ENCODE measurements at regions of chr7 and their contacts with region 1.

Region 1: DNA sequence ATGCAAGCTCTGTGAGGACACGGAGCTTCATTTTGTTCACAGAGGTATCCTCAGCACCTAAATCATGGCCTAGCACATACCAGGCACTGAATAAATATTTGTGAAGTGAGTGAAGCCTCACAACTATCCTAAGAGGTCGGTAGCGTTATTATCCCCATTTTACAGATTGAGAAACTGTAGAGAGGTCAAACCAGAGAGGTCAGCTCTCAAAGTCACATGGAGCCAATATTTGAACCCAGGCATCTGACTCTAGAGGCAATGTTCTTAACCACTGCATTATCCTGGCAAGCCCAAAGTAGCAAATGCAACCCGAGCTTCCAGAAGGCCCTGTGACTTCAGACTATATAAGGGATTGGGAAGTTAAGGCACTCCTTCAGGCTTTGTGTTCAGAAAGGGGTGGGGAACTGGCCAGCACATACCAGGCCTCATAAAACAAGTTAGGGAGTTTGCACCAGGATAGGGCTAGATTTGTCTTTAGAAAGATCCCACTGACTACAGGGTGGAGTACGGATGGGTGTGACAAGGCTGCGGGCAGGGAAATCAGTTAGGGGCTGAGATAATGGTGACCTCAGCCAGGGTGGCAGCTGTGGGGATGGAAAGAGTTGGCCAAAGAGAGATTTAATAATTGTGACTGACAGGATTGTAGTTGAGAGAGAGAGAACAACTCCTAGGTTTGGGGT is 101.4 kb downstream of the TBXAS1 start:
- DNase-seq: no peak
- ATAC-seq: no peak
- H3K4me3 ChIP-seq: no peak overlapping the region
- H3K27ac ChIP-seq: no peak overlapping the region
- H3K4me1 ChIP-seq: no peaks in the 10 kb centered on the region
- H3K27me3 ChIP-seq: peaks cover 0 to 2% (median 0%) of the 10 kb centered on the region in 3 donors
- CTCF ChIP-seq: no peak

Region 2: DNA sequence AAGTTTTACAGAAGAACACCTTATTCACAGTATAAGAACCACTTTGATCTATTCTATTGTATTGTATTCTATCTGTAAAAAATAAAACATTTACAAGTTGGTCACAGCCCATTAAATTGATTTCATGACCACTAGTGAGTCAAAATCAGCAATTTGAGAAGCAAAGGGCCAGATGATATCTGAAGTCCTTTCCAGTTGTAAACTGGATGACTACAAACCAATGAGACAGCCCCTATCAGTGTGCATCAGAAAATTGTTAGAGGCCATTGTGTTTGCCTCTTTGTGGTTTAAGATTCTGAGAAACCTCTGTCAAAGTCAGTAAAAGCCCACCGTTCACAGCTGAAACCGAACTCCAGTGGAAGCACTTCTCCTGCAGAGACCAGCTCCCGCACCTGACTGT is 46.6 kb before region 1 on chr7:
- intact Hi-C with region 1: loop called in 1 of 2 experiments (anchors 5 kb)
- DNase-seq: no peak
- ATAC-seq: no peak
- H3K4me3 ChIP-seq: no peak overlapping the region
- H3K27ac ChIP-seq: no peak overlapping the region
- H3K4me1 ChIP-seq: no peaks in the 10 kb centered on the region
- H3K27me3 ChIP-seq: no peaks in the 10 kb centered on the region
- CTCF ChIP-seq: no peak

Region 3: GRCh38 chr7:139976838-139977656 is 46.6 kb after region 1 on chr7:
- intact Hi-C with region 1: loop called in 1 of 2 experiments (anchors 5 kb)
- DNase-seq: no peak
- ATAC-seq: no peak
- H3K4me3 ChIP-seq: no peak overlapping the region
- H3K27ac ChIP-seq: no peak overlapping the region
- H3K4me1 ChIP-seq: no peaks in the 10 kb centered on the region
- H3K27me3 ChIP-seq: peaks cover 0 to 3% (median 0%) of the 10 kb centered on the region in 3 donors
- CTCF ChIP-seq: no peak

Region 4: DNA sequence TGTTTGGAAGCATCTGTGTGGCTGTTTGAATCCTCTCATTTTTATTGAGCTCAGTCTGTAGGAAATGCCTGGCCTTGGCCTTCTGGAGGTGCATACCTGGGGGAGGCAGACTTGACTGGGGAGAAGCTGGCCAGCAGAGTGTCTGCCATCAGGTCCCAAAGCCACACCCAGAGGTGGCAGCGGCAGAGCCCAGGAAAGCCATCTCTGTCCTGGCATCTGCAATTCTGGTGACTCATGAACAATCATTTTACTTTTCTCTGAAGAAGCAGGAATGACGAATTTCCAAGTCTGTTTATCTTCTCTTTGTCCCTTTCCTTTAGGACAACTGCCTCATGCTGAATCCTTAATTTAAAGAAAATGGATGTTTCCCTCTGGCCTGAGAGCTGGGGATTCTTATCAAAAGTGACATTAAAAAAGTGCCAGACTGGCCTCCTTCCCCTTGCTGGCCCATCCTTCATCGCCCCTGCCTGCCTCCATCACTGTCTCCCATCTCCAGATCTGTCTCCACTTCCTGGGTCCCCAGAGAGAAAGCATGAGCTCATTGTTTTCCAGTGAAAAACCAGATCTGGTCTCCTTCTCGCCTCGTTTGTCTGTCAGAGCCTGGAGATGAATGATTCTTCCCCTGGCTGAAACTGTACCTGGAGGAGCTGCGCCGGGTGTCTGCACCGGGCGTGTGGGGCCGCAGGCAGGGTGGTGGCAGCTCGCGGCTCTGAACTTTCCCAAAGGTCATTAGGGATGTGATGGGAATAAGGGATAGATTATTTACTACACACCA is 1267.9 kb after region 1 on chr7:
- intact Hi-C with region 1: no loop called
- DNase-seq: no peak
- ATAC-seq: no peak
- H3K4me3 ChIP-seq: no peak overlapping the region
- H3K27ac ChIP-seq: no peak overlapping the region
- H3K4me1 ChIP-seq: no peaks in the 10 kb centered on the region
- H3K27me3 ChIP-seq: no peaks in the 10 kb centered on the region
- CTCF ChIP-seq: no peak

Measured in psoas muscle (tissue), 8 donors.